Activated CD4-positive, alpha-beta memory T cell treated with anti-CD3 and anti-CD28 coated beads for 36 hours (primary cell): ENCODE measurements at regions of chr19 and their contacts with region 1.

Region 1: GRCh38 chr19:10194500-10195289 is at the start of gene DNMT1:
- DNase-seq: peak; percentile 99
- H3K4me3 Mint-ChIP-seq: peak within 1 kb of the TSS; percentile 98
- H3K27ac Mint-ChIP-seq: peak within 1 kb of the TSS; percentile 98
- H3K4me1 Mint-ChIP-seq: peaks cover 52% of the 10 kb centered on the region
- H3K27me3 Mint-ChIP-seq: no peaks in the 10 kb centered on the region
- total RNA-seq, gene DNMT1: 356 to 357 TPM

Region 2: DNA sequence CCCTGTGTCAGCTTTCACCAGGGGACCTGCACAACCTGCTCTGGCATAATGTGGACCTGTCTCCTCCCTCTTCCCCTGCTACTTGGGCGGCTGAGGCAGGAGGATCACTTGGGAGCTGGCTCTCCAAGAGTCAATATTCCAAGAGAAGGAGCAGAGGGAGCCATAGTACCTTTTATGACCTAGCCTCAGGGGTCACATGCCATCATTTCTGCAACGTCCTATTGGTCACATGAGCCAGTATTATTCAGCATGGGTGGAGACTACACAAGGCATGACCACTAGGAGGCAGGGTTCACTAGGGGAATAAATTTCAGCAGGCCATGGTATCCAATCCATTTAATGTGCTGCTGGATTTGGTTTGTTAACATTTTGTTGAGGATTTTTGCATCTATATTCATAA is 120.5 kb before region 1 on chr19:
- CTCF ChIA-PET with region 1: no interaction called
- POLR2A ChIA-PET with region 1: no interaction called
- intact Hi-C with region 1: no loop called
- DNase-seq: peak; percentile 63
- H3K4me3 Mint-ChIP-seq: no peak overlapping the region
- H3K27ac Mint-ChIP-seq: no peak overlapping the region
- H3K4me1 Mint-ChIP-seq: no peaks in the 10 kb centered on the region
- H3K27me3 Mint-ChIP-seq: no peaks in the 10 kb centered on the region

Region 3: GRCh38 chr19:10237702-10238101 is 43.0 kb after region 1 on chr19:
- CTCF ChIA-PET with region 1: interaction called, 5 read pairs
- POLR2A ChIA-PET with region 1: interaction called, 4 read pairs
- intact Hi-C with region 1: loop called (anchors 2 kb)
- DNase-seq: no peak
- H3K4me3 Mint-ChIP-seq: no peak overlapping the region
- H3K27ac Mint-ChIP-seq: no peak overlapping the region
- H3K4me1 Mint-ChIP-seq: peaks cover 17% of the 10 kb centered on the region
- H3K27me3 Mint-ChIP-seq: no peaks in the 10 kb centered on the region

Region 4: DNA sequence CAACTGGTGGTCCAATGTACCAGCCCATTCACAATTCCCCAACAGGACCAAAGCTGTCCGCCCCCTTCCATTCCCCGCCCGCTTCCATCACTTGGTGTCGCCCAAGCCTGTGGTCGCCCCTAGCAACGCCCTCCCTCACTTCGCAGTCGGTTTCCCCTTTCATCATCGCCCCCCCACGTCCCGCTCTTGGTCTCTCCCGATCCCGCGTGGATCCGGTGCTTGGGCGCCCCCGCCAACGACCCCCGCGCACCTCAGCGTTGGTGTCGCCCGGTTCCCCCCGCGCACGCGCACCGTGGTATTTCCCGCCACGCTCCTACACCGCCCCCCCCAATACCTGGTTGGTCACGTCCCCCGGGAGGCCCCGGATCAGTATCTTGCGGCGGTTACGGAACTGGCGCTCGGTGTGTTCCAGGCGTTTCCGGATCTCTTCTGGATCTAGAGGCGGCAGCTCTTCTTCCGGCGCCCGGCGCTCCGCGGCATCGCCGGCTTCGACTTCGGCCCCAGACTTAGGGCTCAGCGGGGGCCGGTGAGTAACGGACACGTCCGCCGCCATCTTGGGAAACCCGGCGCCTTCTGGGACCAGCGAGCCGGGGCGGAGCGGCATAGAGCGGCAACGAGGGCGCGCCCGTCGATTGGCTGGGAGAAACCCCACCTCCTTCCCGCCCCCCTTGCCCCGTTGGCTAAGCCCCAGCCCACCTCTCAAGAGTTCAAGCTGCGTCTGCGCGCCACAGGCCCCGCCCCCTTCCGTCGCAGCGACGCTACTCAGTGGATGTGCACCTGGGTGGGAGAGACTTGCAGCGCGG is 138.5 kb after region 1 on chr19 and contains the start of gene RAVER1:
- CTCF ChIA-PET with region 1: no interaction called
- POLR2A ChIA-PET with region 1: no interaction called
- intact Hi-C with region 1: loop called (anchors 10 kb)
- DNase-seq: peak; percentile 99
- H3K4me3 Mint-ChIP-seq: peak within 1 kb of the TSS; percentile 95
- H3K27ac Mint-ChIP-seq: peak within 1 kb of the TSS; percentile 96
- H3K4me1 Mint-ChIP-seq: peaks cover 37% of the 10 kb centered on the region
- H3K27me3 Mint-ChIP-seq: no peaks in the 10 kb centered on the region
- total RNA-seq, gene RAVER1: 81.5 to 85.0 TPM

Region 5: GRCh38 chr19:10602330-10603083 is 407.8 kb after region 1 on chr19:
- CTCF ChIA-PET with region 1: no interaction called
- POLR2A ChIA-PET with region 1: no interaction called
- intact Hi-C with region 1: loop called (anchors 2 kb)
- DNase-seq: peak; percentile 94
- H3K4me3 Mint-ChIP-seq: peak overlapping the region; percentile 88
- H3K27ac Mint-ChIP-seq: peak overlapping the region; percentile 98
- H3K4me1 Mint-ChIP-seq: peaks cover 18% of the 10 kb centered on the region
- H3K27me3 Mint-ChIP-seq: no peaks in the 10 kb centered on the region